Activated CD4-positive, alpha-beta T cell treated with anti-CD3 and anti-CD28 coated beads, Interleukin-2, amount 10 ng/mL, durations not matched to agents 24 days and 14 days (primary cell): ENCODE measurements at regions of chr5 and their contacts with region 1.

Region 1: DNA sequence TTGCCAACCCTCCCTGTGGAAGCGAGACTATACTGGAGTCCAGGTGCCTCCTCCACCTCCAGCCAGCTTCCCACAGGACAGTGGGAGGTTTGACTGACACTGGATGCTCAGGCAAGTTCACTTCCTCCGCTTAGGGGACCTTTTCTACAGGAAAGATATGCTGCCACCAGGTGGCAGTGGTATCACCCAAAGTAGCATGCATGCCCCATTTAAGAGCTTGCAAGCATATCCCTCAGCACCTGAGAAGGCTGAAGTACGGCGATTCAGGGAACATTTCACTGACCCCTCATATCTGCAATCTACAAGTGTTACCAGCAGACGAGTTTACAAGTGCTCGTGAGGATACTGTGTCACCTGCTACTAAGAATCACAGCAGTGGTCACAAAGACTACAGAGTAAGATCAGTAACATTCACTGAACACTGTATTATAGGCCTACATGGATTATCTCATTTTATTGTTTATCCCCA is 75.5 kb downstream of the KLHL3 start:
- DNase-seq: peak; percentile 91
- H3K4me3 Mint-ChIP-seq: no peak overlapping the region
- H3K27ac Mint-ChIP-seq: no peak overlapping the region
- H3K4me1 Mint-ChIP-seq: peaks cover 3% of the 10 kb centered on the region
- H3K27me3 Mint-ChIP-seq: no peaks in the 10 kb centered on the region

Region 2: DNA sequence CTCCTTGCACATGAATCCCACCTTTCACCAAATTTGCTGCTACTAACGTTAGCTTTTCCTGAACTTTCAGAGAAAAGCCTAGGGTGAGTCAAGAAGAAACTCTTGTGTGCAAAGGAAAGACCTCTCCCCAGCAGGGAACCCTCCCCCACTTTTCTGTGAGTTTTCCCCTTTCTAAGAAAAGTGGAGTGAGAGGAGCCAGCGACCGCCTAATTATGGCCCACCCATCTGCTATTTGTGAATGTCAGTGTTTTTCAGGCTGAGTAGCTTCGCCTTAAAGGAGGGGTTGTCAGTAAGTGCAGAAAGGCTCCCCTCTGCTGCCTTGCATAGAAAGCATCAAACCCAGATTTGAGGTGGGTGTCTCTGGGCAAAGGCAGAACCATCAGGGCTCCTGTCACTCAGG is 114.4 kb before region 1 on chr5:
- intact Hi-C with region 1: no loop called
- DNase-seq: no peak
- H3K4me3 Mint-ChIP-seq: no peak overlapping the region
- H3K27ac Mint-ChIP-seq: no peak overlapping the region
- H3K4me1 Mint-ChIP-seq: no peaks in the 10 kb centered on the region
- H3K27me3 Mint-ChIP-seq: no peaks in the 10 kb centered on the region

Region 3: DNA sequence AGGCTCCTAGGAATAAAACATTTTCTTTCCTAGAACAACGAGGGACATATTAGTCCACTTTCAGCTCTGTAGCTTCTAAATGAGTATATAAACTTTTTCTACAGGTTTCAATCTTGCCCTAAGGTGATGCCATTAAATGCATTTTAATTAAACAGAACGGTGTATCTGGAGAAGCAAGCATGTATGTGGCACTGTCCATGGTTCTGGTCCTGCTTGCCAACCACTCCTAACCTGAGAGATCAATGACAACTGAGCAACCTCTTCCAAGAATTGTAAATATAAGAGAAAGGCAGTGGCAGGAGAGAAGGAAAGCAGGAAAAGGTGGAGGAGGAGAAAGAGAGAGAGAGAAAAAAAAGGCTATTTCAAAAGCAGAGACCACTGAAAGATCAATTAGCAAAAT is 65.7 kb before region 1 on chr5:
- intact Hi-C with region 1: no loop called
- DNase-seq: no peak
- H3K4me3 Mint-ChIP-seq: no peak overlapping the region
- H3K27ac Mint-ChIP-seq: no peak overlapping the region
- H3K4me1 Mint-ChIP-seq: no peaks in the 10 kb centered on the region
- H3K27me3 Mint-ChIP-seq: peaks cover 38% of the 10 kb centered on the region

Region 4: GRCh38 chr5:137641148-137641547 is 19.2 kb before region 1 on chr5:
- intact Hi-C with region 1: no loop called
- DNase-seq: no peak
- H3K4me3 Mint-ChIP-seq: no peak overlapping the region
- H3K27ac Mint-ChIP-seq: no peak overlapping the region
- H3K4me1 Mint-ChIP-seq: no peaks in the 10 kb centered on the region
- H3K27me3 Mint-ChIP-seq: no peaks in the 10 kb centered on the region

Region 5: GRCh38 chr5:137706841-137707240 is 46.5 kb after region 1 on chr5:
- intact Hi-C with region 1: no loop called
- DNase-seq: no peak
- H3K4me3 Mint-ChIP-seq: no peak overlapping the region
- H3K27ac Mint-ChIP-seq: no peak overlapping the region
- H3K4me1 Mint-ChIP-seq: no peaks in the 10 kb centered on the region
- H3K27me3 Mint-ChIP-seq: no peaks in the 10 kb centered on the region

Region 6: GRCh38 chr5:137743031-137743640 is 82.8 kb after region 1 on chr5:
- intact Hi-C with region 1: loop called (anchors 1 kb)
- DNase-seq: peak; percentile 89
- H3K4me3 Mint-ChIP-seq: no peak overlapping the region
- H3K27ac Mint-ChIP-seq: no peak overlapping the region
- H3K4me1 Mint-ChIP-seq: peaks cover 6% of the 10 kb centered on the region
- H3K27me3 Mint-ChIP-seq: peaks cover 4% of the 10 kb centered on the region